Psoas muscle (tissue), 8 donors: ENCODE measurements at regions of chr1 and their contacts with region 1.

Region 1: DNA sequence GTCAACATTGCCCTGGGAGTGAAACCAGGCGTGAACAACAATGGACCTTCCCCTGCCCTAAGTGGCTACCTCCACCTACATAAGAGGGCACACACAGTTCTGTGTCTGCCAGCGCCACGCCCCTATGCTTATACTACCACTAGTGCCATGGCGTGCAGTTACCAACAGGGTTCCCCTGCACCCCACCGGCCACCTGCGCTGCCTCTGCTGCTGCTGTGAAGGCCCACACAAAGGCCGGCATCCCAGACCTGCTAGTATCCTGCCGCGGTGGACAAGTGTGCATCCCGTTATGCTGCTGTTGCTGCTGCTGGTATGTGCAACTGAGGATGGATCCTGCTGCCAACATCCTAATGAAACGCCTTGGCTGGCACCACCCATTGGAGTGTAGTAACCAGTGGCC is 75.7 kb downstream of the INTS7 start:
- DNase-seq: peak in 1 of 2 donors; percentile 43
- ATAC-seq: no peak
- H3K4me3 ChIP-seq: no peak overlapping the region
- H3K27ac ChIP-seq: no peak overlapping the region
- H3K4me1 ChIP-seq: no peaks in the 10 kb centered on the region
- H3K27me3 ChIP-seq: no peaks in the 10 kb centered on the region
- CTCF ChIP-seq: no peak

Region 2: DNA sequence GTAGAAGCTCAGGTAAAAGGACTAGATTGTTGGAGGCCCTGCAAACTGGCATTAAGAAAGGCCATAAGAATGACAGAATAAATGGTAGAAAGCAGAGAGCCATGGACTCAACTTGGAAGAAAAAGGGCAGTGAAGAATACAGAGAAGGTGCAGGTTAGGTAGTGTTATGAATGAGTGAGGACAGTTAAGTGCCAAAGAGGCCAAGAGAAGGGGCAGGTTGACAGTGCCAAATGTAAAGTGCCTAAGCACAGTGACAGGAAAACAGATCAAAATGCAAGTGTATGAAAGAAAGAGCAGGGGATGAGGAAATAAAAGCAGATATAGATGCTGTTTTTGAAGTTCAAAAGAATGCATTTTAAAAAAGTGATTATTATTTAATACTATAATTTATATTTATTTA is 32.0 kb after region 1 on chr1:
- intact Hi-C with region 1: loop called in 1 of 2 experiments (anchors 1 kb)
- DNase-seq: no peak
- ATAC-seq: no peak
- H3K4me3 ChIP-seq: no peak overlapping the region
- H3K27ac ChIP-seq: no peak overlapping the region
- H3K4me1 ChIP-seq: no peaks in the 10 kb centered on the region
- H3K27me3 ChIP-seq: no peaks in the 10 kb centered on the region
- CTCF ChIP-seq: no peak